ENCODE measurements at regions of chr9 and their contacts with region 1.

Region 1: DNA sequence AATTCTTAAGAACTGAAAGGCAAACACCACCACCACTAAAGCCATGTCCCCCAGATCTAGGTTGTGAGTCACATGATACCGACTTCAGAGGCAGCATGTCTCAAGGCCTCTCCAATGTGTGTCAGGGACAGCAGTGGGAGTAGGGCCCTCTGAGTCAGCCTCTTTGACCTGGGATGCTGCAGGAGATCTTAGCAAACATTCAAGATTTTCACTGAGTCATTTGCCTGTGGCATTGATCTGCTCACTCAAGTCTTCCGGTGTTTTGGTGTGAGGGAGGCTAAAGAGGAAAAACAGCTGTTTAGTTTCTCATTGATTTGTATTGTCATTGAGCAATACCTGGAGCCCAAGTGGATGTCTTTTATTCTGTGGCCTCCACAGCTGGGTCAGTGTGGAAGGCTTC is 36.1 kb downstream of the TMC1 start:
- DNase-seq: peak; percentile 77 to 99
- H3K4me3 ChIP-seq: no peak overlapping the region
- H3K27ac ChIP-seq: peak overlapping the region; percentile 92
- H3K4me1 ChIP-seq: peaks cover 80% of the 10 kb centered on the region
- H3K27me3 ChIP-seq: no peaks in the 10 kb centered on the region
- CTCF ChIP-seq: no peak

Region 2: DNA sequence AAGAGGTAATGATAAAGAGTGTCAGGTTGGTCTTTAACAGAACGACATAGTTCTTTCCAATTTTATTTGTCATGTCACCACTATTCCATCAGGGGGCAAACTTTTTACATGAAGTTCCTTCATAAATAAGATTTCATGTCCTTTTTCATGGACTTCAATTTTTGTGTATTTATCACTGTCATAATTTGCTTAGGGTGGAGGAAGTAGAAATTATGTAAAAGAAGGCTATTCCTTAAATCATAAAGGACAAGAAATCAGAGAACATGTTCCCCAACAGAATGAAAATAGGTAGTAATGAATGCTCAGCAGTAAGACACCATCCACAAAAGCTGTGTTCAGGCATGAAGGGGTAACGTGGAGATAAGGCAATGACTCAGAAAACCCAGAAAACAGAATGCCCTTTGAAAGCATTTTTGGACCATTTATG is 265.3 kb before region 1 on chr9:
- CTCF ChIA-PET with region 1: no interaction called
- POLR2A ChIA-PET with region 1: interaction called, 11 read pairs
- intact Hi-C with region 1: no loop called
- DNase-seq: no peak
- H3K4me3 ChIP-seq: no peak overlapping the region
- H3K27ac ChIP-seq: no peak overlapping the region
- H3K4me1 ChIP-seq: peaks cover 26% of the 10 kb centered on the region
- H3K27me3 ChIP-seq: no peaks in the 10 kb centered on the region
- CTCF ChIP-seq: peak; percentile 71

Region 3: GRCh38 chr9:72473474-72474261 is 83.9 kb before region 1 on chr9:
- CTCF ChIA-PET with region 1: no interaction called
- POLR2A ChIA-PET with region 1: interaction called, 3 read pairs
- intact Hi-C with region 1: loop called (anchors 1 kb)
- DNase-seq: no peak
- H3K4me3 ChIP-seq: no peak overlapping the region
- H3K27ac ChIP-seq: no peak overlapping the region
- H3K4me1 ChIP-seq: peaks cover 31% of the 10 kb centered on the region
- H3K27me3 ChIP-seq: no peaks in the 10 kb centered on the region
- CTCF ChIP-seq: no peak

Region 4: DNA sequence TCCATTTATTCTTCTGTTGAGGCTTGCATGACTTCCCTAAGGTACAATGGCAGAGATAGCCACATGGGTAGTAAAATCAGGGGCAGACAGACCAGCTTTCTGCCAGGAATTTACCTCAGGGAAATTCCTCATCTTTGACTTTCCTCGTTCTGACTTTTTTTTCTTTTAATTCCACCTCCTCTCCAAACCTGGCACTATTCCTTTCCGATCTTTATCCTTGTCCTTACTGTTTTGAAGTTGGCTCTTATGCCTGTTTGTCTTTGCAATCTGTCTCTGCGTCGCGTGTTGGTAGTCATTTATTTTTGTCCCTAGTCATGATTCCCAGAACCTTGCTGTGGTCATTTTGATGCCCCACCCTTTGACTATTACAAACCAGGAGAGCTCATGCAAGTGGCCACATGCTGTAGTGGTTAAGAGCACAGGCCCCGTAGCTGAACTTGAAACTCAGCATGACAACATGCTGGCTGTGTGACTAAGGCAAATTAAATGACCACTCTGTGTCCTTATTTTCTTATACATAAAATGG is 17.1 kb before region 1 on chr9:
- CTCF ChIA-PET with region 1: no interaction called
- POLR2A ChIA-PET with region 1: interaction called, 12 read pairs
- intact Hi-C with region 1: loop called (anchors 1 kb)
- DNase-seq: peak; percentile 43 to 60
- H3K4me3 ChIP-seq: no peak overlapping the region
- H3K27ac ChIP-seq: peak overlapping the region; percentile 42
- H3K4me1 ChIP-seq: peaks cover 54% of the 10 kb centered on the region
- H3K27me3 ChIP-seq: no peaks in the 10 kb centered on the region
- CTCF ChIP-seq: no peak

Region 5: GRCh38 chr9:72592502-72593403 is 35.2 kb after region 1 on chr9:
- CTCF ChIA-PET with region 1: no interaction called
- POLR2A ChIA-PET with region 1: interaction called, 8 read pairs
- intact Hi-C with region 1: loop called (anchors 1 kb)
- DNase-seq: peak; percentile 37 to 67
- H3K4me3 ChIP-seq: no peak overlapping the region
- H3K27ac ChIP-seq: 0 out of 2 replicates have a peak overlapping the region, but pooled peaks have one; percentile 31
- H3K4me1 ChIP-seq: peaks cover 27% of the 10 kb centered on the region
- H3K27me3 ChIP-seq: no peaks in the 10 kb centered on the region
- CTCF ChIP-seq: peak; percentile 96